Transverse colon (tissue), 4 donors: ENCODE measurements at regions of chr5 and their contacts with region 1.

Region 1: GRCh38 chr5:17828681-17829080 is 194.4 kb downstream of the TAF11L14 start:
- DNase-seq: no peak
- H3K4me3 ChIP-seq: no peak overlapping the region
- H3K27ac ChIP-seq: no peak overlapping the region
- H3K4me1 ChIP-seq: no peaks in the 10 kb centered on the region
- H3K27me3 ChIP-seq: no peaks in the 10 kb centered on the region
- CTCF ChIP-seq: no peak
- EP300 ChIP-seq: no peak
- POLR2A ChIP-seq: no peak

Region 2: DNA sequence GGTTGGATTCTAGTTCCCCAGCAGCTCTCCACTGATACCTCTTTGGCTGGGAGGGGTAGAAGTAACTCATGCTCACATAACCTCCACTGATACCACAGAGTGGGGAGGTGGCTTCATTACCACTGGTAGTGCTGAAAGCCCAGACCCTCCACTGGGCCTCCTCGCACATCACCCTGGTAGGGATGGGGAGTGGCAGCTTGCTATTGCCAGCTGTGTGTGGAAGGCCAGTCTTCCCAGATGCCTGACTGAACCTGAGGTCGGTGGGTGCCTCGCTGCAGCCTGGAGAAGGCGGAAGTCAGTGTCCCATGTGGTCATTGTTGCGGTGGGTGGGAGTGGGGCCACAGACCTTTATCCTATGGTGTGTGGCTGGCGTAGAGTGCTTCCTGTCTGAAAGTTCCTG is 56.4 kb before region 1 on chr5:
- in situ Hi-C with region 1: no loop called
- intact Hi-C with region 1: loop called (anchors 2 kb)
- DNase-seq: no peak
- H3K4me3 ChIP-seq: no peak overlapping the region
- H3K27ac ChIP-seq: no peak overlapping the region
- H3K4me1 ChIP-seq: no peaks in the 10 kb centered on the region
- H3K27me3 ChIP-seq: no peaks in the 10 kb centered on the region
- CTCF ChIP-seq: no peak
- EP300 ChIP-seq: no peak
- POLR2A ChIP-seq: no peak

Region 3: DNA sequence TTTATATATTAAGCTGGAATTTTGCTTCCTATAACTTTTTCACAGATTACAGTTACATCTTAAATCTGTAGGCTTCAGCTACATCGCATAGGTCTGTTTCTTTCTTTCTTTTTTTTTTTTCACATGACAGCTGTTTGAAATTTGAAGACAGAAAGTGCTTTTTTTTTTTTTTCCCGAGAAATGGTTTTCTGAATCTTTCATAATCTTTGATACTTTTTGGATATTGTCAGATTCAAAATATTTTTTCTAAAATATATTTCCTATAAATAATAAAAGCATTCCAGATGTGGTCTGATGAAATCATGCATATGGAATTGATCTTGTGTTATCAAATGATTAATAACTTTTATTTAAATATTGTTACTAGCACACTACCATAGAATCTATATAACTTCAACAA is 17.8 kb after region 1 on chr5:
- in situ Hi-C with region 1: no loop called
- intact Hi-C with region 1: loop called (anchors 1 kb)
- DNase-seq: no peak
- H3K4me3 ChIP-seq: no peak overlapping the region
- H3K27ac ChIP-seq: no peak overlapping the region
- H3K4me1 ChIP-seq: no peaks in the 10 kb centered on the region
- H3K27me3 ChIP-seq: no peaks in the 10 kb centered on the region
- CTCF ChIP-seq: no peak
- EP300 ChIP-seq: no peak
- POLR2A ChIP-seq: no peak